ENCODE measurements at regions of chr5 and their contacts with region 1.

Region 1: GRCh38 chr5:61055434-61056006 is 106.7 kb downstream of the SMIM15 start:
- DNase-seq: no peak
- ATAC-seq: no peak
- H3K4me3 Mint-ChIP-seq: no peak overlapping the region
- H3K27ac Mint-ChIP-seq: no peak overlapping the region
- H3K4me1 Mint-ChIP-seq: peaks cover 3% of the 10 kb centered on the region
- H3K27me3 Mint-ChIP-seq: no peaks in the 10 kb centered on the region

Region 2: DNA sequence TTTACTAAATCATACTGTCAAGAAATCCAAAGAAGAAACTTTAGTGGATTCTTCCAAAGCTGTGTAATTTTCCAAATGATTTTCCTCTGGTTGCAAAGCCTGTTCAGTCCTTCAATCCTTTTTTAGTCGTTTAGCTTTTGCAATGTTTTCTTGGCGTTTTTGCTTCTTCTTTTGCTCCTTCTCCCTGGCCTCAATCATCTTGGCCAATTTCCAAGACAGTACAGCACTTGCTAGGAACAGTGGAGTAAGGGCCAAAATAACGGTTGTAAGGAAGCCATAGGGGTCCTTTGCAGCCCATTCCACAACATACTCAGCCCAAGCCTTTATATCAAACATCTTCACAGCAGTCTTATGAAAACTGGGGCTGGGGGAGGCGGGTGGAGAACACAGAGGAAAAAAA is 104.3 kb after region 1 on chr5:
- CTCF ChIA-PET with region 1: no interaction called
- DNase-seq: no peak
- ATAC-seq: no peak
- H3K4me3 Mint-ChIP-seq: no peak overlapping the region
- H3K27ac Mint-ChIP-seq: no peak overlapping the region
- H3K4me1 Mint-ChIP-seq: peaks cover 43% of the 10 kb centered on the region
- H3K27me3 Mint-ChIP-seq: no peaks in the 10 kb centered on the region

Region 3: DNA sequence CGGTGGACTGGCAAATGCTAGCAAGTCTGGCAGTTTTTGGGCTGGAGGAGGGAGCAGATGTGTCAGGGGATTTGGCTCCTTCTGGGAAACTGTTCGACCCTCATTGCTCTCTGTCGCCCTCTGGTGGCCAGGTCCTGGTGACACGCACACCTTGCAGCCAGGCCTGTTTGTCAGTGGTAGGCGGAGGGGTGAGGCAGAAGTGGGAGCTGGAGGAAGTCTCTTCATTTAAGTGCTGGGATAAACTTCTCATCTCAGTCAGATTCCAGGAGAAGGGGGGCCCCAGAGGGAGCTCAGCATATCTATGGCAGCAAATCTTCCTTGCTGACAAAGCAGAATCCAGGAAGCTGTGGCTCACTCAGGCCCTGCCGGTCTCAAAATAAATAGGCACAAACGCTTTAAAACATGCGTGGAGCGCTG is 603.1 kb after region 1 on chr5:
- CTCF ChIA-PET with region 1: interaction called, 11 read pairs
- DNase-seq: peak; percentile 82
- ATAC-seq: peak; percentile 78
- H3K4me3 Mint-ChIP-seq: no peak overlapping the region
- H3K27ac Mint-ChIP-seq: no peak overlapping the region
- H3K4me1 Mint-ChIP-seq: no peaks in the 10 kb centered on the region
- H3K27me3 Mint-ChIP-seq: peaks cover 24% of the 10 kb centered on the region

Measured in activated CD8-positive, alpha-beta memory T cell treated with anti-CD3 and anti-CD28 coated beads, Interleukin-2, amount 10 ng/mL, durations not matched to agents 7 days and 5 days (primary cell).